ENCODE measurements at regions of chr17 and their contacts with region 1.

Region 1: GRCh38 chr17:5584383-5585286 is at the start of gene NLRP1:
- DNase-seq: peak; percentile 96 to 98
- H3K4me3 ChIP-seq: peak within 1 kb of the TSS; percentile 32
- CTCF ChIP-seq: no peak
- POLR2A ChIP-seq: peak in 1 of 2 donors; percentile 40
- total RNA-seq, gene NLRP1: 55.5 to 163 (median 68.9) TPM

Region 2: DNA sequence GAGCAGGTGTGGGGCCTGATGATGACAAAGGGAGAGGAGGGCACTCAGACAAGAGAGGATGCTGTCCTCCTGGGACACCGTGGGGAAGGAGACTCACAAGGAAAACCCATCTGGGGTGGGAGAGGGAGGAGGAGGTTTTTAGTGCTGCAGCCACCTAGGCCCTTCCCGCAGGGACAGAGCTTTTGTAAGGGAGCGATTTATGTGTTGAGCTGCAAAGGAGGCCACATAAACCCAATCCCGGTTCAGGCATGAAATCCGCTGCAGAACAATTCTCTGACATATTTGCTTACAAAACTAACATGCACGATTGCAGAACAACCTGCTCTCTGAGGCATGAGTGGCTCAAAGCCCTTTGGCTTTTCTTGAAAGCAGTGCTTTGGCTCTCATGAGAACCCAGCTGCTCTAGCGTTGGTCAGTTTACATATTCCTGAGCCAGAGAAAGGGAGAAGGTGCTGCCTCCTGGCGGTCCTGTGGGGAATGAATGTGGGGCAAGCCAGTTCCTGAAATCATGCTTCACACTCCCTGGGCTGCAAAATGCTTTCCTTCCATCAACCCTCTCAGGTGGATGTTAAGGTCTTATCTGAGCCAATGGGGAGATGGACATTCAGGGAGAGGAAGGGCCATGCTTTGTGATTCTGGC is 122.1 kb after region 1 on chr17:
- intact Hi-C with region 1: loop called (anchors 10 kb)
- DNase-seq: peak; percentile 35 to 81
- H3K4me3 ChIP-seq: no peak overlapping the region
- CTCF ChIP-seq: no peak
- POLR2A ChIP-seq: no peak

Region 3: DNA sequence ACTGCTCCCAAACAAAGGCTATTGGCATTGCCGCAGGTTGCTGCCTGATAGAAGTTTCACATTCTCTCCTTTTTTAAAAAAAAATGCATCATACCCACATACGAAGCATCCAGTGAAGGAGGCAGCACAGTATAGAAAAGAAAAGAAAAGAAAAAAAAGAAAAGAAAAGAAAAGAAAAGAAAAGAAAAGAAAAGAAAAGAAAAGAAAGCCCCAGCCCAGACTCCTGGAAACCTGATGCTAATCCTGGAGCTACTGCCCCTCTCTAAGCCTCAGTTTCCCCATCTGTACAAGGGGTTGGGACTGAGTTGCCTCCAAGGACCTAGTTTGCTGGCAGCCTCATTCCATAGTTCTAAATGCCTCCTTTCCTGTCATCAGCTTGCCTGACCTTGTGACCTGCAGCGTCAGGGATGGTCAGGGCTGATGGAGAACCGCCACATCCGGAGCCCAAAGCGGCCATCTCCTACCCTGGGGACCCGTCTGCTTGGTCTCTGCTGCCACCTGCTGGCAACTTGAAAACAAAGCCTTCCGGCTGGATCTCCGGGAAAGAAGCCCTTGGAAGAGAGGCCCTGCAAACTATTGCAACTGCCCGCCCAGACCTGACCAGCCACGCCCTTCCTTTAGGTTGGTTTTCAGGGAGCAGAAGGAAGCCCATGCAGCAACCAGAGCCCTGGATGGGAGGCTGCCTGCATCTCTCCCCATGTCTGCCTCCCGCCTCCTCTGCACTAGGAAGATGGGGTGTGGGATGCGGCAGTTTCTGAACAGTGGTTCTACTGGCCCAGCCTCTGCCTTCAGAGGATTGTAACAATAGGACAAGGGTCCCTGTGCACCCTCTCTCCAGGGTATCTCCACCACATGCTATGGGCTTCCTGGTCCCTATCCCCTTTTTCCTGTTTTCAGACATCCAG is 837.3 kb after region 1 on chr17:
- intact Hi-C with region 1: loop called (anchors 2 kb)
- DNase-seq: peak; percentile 66 to 95
- H3K4me3 ChIP-seq: no peak overlapping the region
- CTCF ChIP-seq: no peak
- POLR2A ChIP-seq: no peak

Measured in lower leg skin (tissue), 4 donors.